Activated CD4-positive, alpha-beta memory T cell treated with anti-CD3 and anti-CD28 coated beads for 36 hours (primary cell): ENCODE measurements at regions of chr1 and their contacts with region 1.

Region 1: GRCh38 chr1:156608036-156608674 is 6.9 kb upstream of the GPATCH4 start:
- DNase-seq: peak; percentile 66
- H3K4me3 Mint-ChIP-seq: no peak overlapping the region
- H3K27ac Mint-ChIP-seq: no peak overlapping the region
- H3K4me1 Mint-ChIP-seq: peaks cover 3% of the 10 kb centered on the region
- H3K27me3 Mint-ChIP-seq: peaks cover 9% of the 10 kb centered on the region

Region 2: DNA sequence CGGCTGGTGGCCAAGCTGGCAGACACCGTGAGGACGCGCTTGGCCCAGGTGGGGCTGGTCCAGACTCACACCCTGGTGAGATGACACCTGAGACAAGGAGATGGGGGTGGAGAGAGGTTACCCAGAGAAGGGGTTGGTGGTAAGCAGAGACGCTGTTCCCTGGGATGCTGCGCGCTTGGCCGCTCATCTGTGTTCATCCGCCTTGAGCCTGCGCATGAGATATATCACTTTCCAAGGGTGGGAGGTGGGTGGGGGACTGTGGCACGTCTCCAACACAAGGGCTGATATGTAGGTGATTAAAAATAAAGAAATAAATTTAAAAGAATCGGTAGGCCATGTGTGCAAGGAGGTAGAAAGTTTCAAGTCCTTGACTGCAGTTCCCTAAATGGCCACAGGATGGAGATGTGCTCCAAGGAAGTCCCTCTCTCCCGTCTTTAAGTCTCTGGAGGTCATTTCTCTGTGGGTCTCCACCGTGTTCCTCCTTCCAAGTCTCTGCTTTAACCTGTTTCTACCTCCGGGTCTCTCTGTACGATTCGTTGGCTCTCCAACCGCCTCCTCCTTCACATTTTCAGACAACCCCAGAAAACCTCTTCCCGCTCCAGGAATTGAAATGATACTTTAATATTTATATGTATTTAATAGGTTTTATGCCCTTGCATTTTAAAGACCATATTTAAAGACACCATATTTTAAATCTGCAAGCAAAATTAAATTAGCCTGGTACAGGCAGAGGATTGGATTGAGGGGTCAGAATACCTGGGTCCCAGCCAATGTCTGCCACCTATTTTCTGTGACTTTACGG is 24.1 kb before region 1 on chr1:
- CTCF ChIA-PET with region 1: interaction called, 78 read pairs
- POLR2A ChIA-PET with region 1: no interaction called
- intact Hi-C with region 1: loop called (anchors 1 kb)
- DNase-seq: peak; percentile 79
- H3K4me3 Mint-ChIP-seq: no peak overlapping the region
- H3K27ac Mint-ChIP-seq: no peak overlapping the region
- H3K4me1 Mint-ChIP-seq: peaks cover 2% of the 10 kb centered on the region
- H3K27me3 Mint-ChIP-seq: no peaks in the 10 kb centered on the region

Region 3: GRCh38 chr1:156591432-156592157 is 16.6 kb before region 1 on chr1 and contains the start of gene NAXE:
- CTCF ChIA-PET with region 1: interaction called, 78 read pairs
- POLR2A ChIA-PET with region 1: interaction called, 3 read pairs
- intact Hi-C with region 1: no loop called
- DNase-seq: peak; percentile 77
- H3K4me3 Mint-ChIP-seq: peak within 1 kb of the TSS; percentile 79
- H3K27ac Mint-ChIP-seq: peak within 1 kb of the TSS; percentile 85
- H3K4me1 Mint-ChIP-seq: peaks cover 19% of the 10 kb centered on the region
- H3K27me3 Mint-ChIP-seq: no peaks in the 10 kb centered on the region
- total RNA-seq, gene NAXE: 73.6 to 76.7 TPM

Region 4: DNA sequence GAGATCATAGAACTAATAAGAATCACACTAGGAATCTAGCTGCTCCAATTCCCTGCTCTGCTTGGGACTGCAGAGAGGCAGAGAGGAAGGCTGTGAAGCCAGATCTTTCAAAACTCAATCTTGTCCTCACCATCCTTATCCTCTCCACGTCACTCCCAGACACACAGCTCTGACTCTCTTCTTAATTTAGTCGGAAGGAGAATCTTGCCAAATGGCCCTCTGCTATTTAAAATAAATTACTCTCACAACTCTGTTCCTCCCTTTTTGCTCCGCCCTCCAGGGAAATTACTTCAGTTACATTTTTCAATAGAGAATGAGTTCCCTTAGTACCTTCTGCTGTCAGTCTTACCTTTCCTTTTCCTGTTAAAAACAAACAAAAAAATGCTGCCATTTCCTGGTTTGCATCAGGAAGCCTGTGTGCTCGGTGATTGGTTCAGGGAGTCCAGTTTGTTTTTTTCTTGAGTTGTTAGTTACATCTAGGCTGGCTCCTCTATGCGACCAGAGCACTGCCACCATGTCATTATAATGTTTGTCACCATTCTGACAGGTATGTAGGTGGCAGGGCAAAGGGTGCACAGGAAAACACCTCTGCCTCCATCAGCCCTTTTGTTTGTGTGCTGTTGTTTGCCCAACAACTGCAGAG is 864.0 kb after region 1 on chr1:
- CTCF ChIA-PET with region 1: no interaction called
- POLR2A ChIA-PET with region 1: no interaction called
- intact Hi-C with region 1: no loop called
- DNase-seq: no peak
- H3K4me3 Mint-ChIP-seq: no peak overlapping the region
- H3K27ac Mint-ChIP-seq: no peak overlapping the region
- H3K4me1 Mint-ChIP-seq: no peaks in the 10 kb centered on the region
- H3K27me3 Mint-ChIP-seq: peaks cover 18% of the 10 kb centered on the region